ENCODE measurements at regions of chr12 and their contacts with region 1.

Region 1: DNA sequence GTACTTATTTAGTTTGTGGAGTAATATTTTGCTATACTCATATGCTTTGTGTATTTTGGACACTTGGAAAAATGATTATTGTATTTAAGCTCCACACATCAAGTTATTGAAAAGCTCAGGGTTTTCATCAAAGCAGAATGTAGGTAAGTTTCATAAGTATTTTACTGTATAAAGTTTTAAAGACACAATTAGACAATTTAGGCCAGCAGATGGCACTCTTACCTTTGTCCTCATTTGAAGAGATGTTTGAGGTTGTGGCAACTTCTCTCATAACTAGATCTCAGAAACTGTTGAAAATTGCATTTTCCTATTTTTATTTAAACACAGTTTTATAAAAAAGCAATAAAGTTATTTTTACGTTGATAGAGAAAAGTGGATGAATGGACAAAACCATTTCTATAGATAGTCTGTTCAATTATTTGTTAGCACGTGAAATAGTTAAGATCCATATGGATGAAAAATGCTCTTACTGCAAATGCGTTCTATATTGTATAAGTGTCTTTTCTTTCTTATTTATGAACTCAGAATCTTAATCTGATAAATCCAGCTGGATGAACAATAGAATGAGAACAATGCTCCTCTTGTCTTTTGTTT is 300.0 kb downstream of the AEBP2 start:
- DNase-seq: peak; percentile 35
- ATAC-seq: no peak
- H3K4me3 Mint-ChIP-seq: no peak overlapping the region
- H3K27ac Mint-ChIP-seq: no peak overlapping the region
- H3K4me1 Mint-ChIP-seq: no peaks in the 10 kb centered on the region
- H3K27me3 Mint-ChIP-seq: no peaks in the 10 kb centered on the region

Region 2: DNA sequence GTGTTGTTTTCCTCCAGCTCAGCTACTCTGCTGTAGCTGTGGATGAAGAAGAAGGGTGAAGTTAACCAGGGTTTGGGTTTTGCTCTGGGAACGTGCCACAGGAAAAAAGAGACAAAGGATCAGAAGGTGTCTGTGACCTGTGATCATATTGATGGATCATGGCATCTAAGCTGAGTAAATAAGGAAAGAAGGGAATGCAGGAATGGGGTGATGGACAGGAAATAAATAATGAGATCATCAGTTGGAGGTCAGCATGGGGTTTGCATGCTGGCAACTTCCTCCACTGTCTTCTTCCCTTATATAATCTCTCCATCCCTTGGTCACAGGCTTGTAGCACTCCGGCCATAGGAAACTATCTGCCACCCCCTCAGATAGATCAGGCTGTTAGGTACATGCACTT is 198.8 kb after region 1 on chr12:
- CTCF ChIA-PET with region 1: no interaction called
- POLR2A ChIA-PET with region 1: no interaction called
- intact Hi-C with region 1: no loop called
- DNase-seq: no peak
- ATAC-seq: no peak
- H3K4me3 Mint-ChIP-seq: no peak overlapping the region
- H3K27ac Mint-ChIP-seq: no peak overlapping the region
- H3K4me1 Mint-ChIP-seq: no peaks in the 10 kb centered on the region
- H3K27me3 Mint-ChIP-seq: peaks cover 2% of the 10 kb centered on the region

Region 3: GRCh38 chr12:20376984-20377383 is 637.7 kb after region 1 on chr12:
- CTCF ChIA-PET with region 1: no interaction called
- POLR2A ChIA-PET with region 1: no interaction called
- intact Hi-C with region 1: loop called in 1 of 2 experiments (anchors 5 kb)
- DNase-seq: no peak
- ATAC-seq: no peak
- H3K4me3 Mint-ChIP-seq: no peak overlapping the region
- H3K27ac Mint-ChIP-seq: no peak overlapping the region
- H3K4me1 Mint-ChIP-seq: no peaks in the 10 kb centered on the region
- H3K27me3 Mint-ChIP-seq: peaks cover 7% of the 10 kb centered on the region

Measured in activated CD4-positive, alpha-beta T cell treated with anti-CD3 and anti-CD28 coated beads for 36 hours (primary cell).